ENCODE measurements at regions of chr1 and their contacts with region 1.

Region 1: DNA sequence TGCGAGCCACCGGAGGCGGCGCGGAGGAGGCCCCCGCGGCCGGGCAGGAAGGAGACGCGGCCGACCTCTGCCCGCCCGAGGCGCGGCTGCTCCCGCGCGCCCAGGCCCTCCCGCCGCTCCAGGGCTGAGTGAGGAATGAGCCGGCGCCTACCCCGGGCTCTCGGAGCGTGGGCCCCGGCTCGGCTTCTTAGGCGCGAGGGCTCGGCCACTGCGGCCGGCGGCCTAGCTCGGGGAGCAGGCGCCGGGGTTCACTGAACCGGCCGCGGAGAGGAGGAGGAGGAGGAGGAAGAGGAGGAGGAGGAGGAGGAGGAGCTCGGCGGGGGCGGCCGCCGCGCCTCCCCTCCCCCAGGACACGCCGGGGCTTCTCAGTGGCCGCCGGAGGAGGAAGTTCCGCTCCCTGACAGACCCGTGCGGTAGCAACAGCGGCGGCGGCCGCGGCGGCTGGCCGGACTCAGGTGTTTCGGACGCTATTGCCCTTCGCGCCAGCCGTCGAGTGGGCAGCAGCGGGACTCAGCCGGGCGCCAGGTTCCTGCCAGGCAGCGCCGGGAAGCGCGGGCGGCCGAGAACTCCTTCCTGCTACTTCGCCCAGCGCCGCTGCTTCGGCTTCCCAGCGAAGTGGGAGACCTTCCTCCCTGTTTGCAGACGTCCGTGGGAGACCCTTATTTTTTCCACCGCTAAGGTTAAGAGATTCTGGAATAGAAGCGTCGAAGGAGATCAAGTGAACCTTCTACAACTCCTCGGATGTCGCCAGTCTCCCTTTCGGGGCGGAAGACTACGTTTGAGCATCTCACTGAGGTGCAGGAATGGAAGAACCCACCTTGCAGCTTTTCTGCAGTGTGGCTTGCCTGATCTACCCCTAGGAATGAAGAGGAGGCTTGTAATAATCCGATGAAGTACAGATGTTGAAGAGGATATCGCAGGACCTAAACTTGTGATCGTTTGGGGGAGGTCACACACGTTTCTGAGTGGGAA is at the start of gene MAN1A2:
- DNase-seq: peak; percentile 81
- ATAC-seq: peak; percentile 74
- H3K4me3 ChIP-seq: peak within 1 kb of the TSS; percentile 91
- H3K27ac ChIP-seq: peak within 1 kb of the TSS; percentile 58
- H3K4me1 ChIP-seq: peaks cover 41% of the 10 kb centered on the region
- H3K27me3 ChIP-seq: no peaks in the 10 kb centered on the region
- CTCF ChIP-seq: no peak
- total RNA-seq, gene MAN1A2: 18.0 and 21.1 TPM in 2 replicates

Region 2: GRCh38 chr1:117067533-117068370 is 299.6 kb before region 1 on chr1:
- CTCF ChIA-PET with region 1: no interaction called
- POLR2A ChIA-PET with region 1: no interaction called
- intact Hi-C with region 1: loop called (anchors 2 kb)
- DNase-seq: peak; percentile 65
- ATAC-seq: peak; percentile 95
- H3K4me3 ChIP-seq: no peak overlapping the region
- H3K27ac ChIP-seq: no peak overlapping the region
- H3K4me1 ChIP-seq: no peaks in the 10 kb centered on the region
- H3K27me3 ChIP-seq: no peaks in the 10 kb centered on the region
- CTCF ChIP-seq: peak; percentile 89

Region 3: DNA sequence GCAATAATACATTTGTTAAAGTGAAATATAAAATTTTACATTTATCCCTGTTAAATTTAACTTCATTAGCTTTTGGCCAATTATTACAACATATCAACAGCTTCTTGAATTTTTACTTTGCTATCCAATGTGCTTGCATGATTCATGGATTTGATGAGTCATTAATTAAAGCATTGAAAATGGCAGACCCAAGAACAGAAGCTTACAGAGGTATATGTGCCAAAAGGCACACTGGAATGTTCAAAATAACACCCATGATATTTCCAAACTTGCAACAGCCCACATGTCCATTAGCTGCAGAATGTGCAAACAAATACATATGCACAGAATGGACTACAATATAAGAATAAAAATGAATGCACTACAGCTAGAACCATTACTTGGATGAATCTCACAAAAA is 76.4 kb before region 1 on chr1:
- CTCF ChIA-PET with region 1: no interaction called
- POLR2A ChIA-PET with region 1: no interaction called
- intact Hi-C with region 1: no loop called
- DNase-seq: peak; percentile 15
- ATAC-seq: no peak
- H3K4me3 ChIP-seq: no peak overlapping the region
- H3K27ac ChIP-seq: no peak overlapping the region
- H3K4me1 ChIP-seq: no peaks in the 10 kb centered on the region
- H3K27me3 ChIP-seq: no peaks in the 10 kb centered on the region
- CTCF ChIP-seq: no peak

Region 4: DNA sequence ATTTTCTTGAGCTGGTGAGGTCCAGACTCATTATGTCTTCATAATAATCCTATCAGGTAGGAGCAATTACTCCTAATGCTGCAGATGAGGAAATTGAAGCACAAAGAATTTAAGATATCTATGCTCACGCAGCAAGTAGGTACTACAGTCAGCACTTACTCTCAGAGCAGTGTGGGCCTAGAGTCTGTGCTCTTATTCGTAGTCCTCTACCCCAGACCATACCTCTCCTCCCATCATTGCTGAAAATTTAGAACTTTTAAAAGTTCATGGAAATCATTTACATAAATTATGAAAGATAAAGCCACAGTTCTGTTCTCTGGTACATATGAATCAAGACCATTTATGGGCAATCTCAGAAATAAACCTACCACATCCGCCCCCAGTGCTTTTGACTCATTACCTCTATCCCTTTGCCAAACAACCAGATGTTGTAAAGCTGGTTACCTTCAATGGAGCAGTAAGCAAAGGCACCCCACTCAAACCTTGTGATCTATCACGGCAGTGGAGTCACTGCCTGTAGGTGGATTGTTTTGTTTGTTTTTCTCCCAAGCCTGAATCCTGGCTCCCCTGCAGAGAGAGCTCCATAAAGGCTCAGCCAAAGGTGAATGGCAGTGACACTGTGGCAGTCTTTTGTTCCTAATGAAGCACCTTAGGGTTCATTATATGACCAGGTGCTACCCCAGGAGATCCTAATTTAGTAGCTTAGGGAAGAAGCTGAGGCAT is 21.0 kb before region 1 on chr1:
- CTCF ChIA-PET with region 1: interaction called, 3 read pairs
- POLR2A ChIA-PET with region 1: interaction called, 9 read pairs
- intact Hi-C with region 1: loop called (anchors 1 kb)
- DNase-seq: peak; percentile 85
- ATAC-seq: peak; percentile 90
- H3K4me3 ChIP-seq: no peak overlapping the region
- H3K27ac ChIP-seq: peak overlapping the region; percentile 43
- H3K4me1 ChIP-seq: peaks cover 15% of the 10 kb centered on the region
- H3K27me3 ChIP-seq: no peaks in the 10 kb centered on the region
- CTCF ChIP-seq: no peak

Region 5: DNA sequence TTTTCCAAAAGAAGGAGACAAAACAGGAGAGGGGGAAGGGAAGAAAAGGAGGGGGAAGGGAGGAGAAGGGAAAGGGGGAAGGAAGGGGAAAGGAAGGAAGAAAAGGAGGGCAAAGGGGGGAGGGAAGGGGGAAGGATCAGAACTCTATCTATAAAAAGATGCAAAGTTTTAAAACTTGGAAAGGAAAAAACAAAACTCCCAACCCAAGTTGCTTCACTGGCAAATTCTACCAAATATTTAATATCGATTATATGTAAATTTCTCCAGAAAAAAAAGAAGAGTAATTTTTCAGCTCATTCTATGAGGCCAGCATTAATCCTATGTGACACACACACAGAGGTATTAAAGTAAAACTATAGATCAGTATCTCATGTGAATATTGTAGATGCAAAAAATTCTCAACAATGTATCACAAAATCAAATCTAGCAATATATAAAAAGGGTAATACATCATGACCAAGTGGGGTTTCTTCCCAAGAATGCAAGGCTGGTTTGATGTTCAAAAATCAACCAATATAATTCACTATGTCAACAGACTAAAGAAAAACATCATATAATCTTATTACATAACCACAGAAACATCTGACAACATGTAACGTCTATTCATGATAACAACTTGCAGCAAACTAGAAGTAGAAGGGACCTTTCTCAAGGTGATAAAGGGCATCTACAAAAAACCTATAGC is 57.9 kb after region 1 on chr1:
- CTCF ChIA-PET with region 1: no interaction called
- POLR2A ChIA-PET with region 1: no interaction called
- intact Hi-C with region 1: no loop called
- DNase-seq: no peak
- ATAC-seq: no peak
- H3K4me3 ChIP-seq: no peak overlapping the region
- H3K27ac ChIP-seq: no peak overlapping the region
- H3K4me1 ChIP-seq: peaks cover 12% of the 10 kb centered on the region
- H3K27me3 ChIP-seq: no peaks in the 10 kb centered on the region
- CTCF ChIP-seq: no peak

Region 6: GRCh38 chr1:117512743-117513321 is 145.5 kb after region 1 on chr1:
- CTCF ChIA-PET with region 1: no interaction called
- POLR2A ChIA-PET with region 1: no interaction called
- intact Hi-C with region 1: loop called (anchors 5 kb)
- DNase-seq: peak; percentile 63
- ATAC-seq: peak; percentile 69
- H3K4me3 ChIP-seq: no peak overlapping the region
- H3K27ac ChIP-seq: no peak overlapping the region
- H3K4me1 ChIP-seq: no peaks in the 10 kb centered on the region
- H3K27me3 ChIP-seq: no peaks in the 10 kb centered on the region
- CTCF ChIP-seq: peak; percentile 83

Region 7: DNA sequence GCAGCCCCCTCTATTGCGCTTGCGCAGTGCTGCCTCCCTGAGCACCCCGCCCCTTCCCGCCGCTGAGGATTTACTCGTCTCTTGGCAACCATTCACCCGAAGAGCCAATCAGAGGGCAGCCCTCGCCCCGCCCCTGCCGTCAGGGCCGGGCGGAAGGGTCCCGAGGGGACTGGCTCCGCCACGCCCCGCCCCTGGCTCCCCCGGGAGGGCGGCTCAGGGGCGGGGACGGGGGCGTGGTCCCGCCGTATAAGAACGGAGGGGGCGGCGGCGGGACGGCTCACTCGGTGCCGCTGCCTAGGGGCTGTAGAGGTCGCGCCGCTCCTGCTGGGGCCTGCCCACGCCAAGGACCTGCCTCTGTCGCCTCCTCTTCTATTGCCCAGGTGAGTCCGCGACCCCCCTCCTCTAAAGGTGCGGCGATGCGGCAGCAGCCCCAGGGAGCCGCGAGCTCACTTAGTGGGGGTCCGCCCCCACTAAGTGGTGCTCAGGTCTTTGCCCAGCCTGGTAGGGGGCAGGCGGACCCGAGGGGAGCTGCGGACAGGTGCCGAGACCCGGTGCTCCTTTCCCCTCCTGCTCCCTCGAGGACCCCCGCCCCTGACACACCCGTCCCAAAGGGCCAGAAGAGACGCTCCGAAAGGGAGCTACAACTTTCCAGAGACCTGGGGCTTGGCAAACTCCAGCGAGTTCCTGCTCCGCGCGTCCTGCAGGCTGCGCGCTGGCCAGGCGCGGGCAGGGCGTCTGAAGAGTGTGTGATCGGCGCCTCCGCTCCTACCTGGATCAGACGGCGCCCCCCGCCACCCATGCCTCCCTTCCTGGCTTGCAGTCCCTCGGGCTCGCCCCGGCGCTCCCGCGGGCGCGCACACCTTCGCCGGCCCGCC is 238.7 kb after region 1 on chr1 and contains the start of gene TENT5C:
- CTCF ChIA-PET with region 1: no interaction called
- POLR2A ChIA-PET with region 1: no interaction called
- intact Hi-C with region 1: loop called (anchors 10 kb)
- DNase-seq: peak; percentile 99
- ATAC-seq: peak; percentile 82
- H3K4me3 ChIP-seq: peak within 1 kb of the TSS; percentile 97
- H3K27ac ChIP-seq: peak within 1 kb of the TSS; percentile 29
- H3K4me1 ChIP-seq: peaks cover 14% of the 10 kb centered on the region
- H3K27me3 ChIP-seq: no peaks in the 10 kb centered on the region
- CTCF ChIP-seq: no peak
- total RNA-seq, gene TENT5C: 2.2 and 2.4 TPM in 2 replicates

Region 8: DNA sequence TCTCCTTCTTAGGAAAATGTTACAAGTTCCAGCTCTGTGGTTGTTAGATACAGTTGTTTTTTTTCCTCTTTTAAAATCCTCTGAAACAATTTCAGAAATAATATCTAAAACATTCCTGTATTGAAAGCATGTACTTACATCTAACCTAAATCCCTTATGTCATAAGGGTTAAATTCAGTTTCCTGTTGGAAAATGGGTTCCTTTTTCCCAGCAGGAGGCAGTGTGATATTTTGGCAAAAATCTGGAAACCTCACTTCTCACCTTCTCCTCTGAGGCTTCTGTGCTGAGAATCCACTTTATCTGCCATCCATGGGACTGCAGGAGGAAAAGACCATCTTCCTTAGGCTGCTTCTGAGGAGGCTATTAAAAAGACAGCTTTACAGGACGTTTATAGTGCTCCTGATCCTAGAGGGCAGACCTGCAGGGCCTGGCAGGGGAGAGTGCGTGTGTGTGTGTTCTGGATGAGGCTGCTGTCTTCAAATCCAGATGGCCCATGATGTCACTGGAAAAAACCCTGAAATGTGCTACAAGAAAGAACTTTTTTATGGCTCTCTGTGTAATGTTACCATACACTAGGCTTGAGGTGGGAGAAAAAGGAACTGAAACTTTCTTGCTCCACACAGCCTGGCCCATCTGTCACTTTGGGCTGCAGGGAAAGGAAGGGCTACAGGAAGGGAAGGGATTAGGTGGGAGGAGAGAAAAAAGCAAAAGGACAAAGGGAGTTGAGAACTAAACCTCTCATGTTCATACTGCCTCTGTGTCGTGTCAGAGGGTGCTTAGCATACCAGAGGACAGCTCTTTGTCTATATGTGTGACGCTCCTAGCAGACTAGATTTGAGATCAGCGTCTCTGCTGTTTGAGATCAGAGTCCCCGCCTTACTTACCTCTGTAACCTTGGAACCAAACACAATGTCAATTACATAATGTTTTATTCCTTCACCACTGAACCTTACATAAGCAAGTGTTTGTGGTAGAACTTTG is 1196.9 kb after region 1 on chr1:
- CTCF ChIA-PET with region 1: no interaction called
- POLR2A ChIA-PET with region 1: no interaction called
- intact Hi-C with region 1: no loop called
- DNase-seq: peak; percentile 10
- ATAC-seq: no peak
- H3K4me3 ChIP-seq: no peak overlapping the region
- H3K27ac ChIP-seq: no peak overlapping the region
- H3K4me1 ChIP-seq: no peaks in the 10 kb centered on the region
- H3K27me3 ChIP-seq: peaks cover 18% of the 10 kb centered on the region
- CTCF ChIP-seq: peak; percentile 45

Measured in PC-3 (cell line).